CD8-positive, alpha-beta memory T cell (primary cell): ENCODE measurements at regions of chr6 and their contacts with region 1.

Region 1: GRCh38 chr6:137799950-137800568 is 67.0 kb upstream of the TNFAIP3 start:
- DNase-seq: peak; percentile 44 to 82 (median 73)
- H3K4me3 ChIP-seq: no peak overlapping the region
- H3K4me3 Mint-ChIP-seq: peak overlapping the region in 1 of 7 donors; percentile 30
- H3K27ac ChIP-seq: no peak overlapping the region
- H3K27ac Mint-ChIP-seq: peak overlapping the region in 7 of 8 donors; percentile 21 to 91 (median 82)
- H3K4me1 ChIP-seq: peaks cover 38% of the 10 kb centered on the region
- H3K4me1 Mint-ChIP-seq: peaks cover 32 to 57% (median 39%) of the 10 kb centered on the region in 3 donors
- H3K27me3 ChIP-seq: no peaks in the 10 kb centered on the region
- H3K27me3 Mint-ChIP-seq: no peaks in the 10 kb centered on the region

Region 2: DNA sequence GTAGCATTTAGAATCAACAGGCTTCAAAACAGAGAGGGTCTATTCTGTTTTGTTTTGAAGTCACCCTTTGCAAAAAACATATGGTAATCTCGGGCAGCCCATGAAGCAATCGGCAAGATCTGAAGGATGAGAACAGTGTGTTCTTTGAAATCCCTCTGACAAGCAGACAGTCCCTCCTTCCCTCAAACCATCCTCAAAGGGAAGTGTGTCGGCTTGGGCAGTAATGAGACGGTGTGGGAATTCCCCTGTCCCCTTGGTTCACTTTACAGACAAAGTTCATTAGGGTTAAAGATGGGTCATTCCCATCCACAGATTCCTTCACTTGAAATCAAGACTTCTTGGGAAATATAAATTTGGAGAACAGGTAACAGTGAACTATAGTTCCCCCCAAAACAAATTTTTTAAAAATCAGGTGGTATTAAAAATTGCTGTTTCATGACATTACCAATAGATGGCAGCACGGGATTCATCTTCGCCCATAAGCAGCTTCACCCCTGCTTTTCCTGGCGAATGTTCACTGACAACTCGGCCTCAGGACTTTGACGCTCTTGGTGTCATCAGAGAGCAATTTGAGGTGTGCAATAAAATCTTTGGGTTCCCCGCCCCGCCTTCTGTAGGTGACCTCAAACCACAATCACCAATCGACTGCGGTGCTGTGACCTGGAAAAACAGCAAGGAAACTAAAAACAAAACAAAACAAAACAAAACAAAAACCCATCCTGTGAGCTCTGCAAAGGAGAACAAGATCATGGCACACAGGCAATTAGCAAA is 92.3 kb before region 1 on chr6:
- CTCF ChIA-PET with region 1: interaction called, 30 read pairs
- POLR2A ChIA-PET with region 1: interaction called, 3 read pairs
- DNase-seq: peak; percentile 74 to 96 (median 92)
- H3K4me3 ChIP-seq: peak overlapping the region; percentile 20
- H3K4me3 Mint-ChIP-seq: peak overlapping the region; percentile 38 to 78 (median 75)
- H3K27ac ChIP-seq: peak overlapping the region; percentile 72
- H3K27ac Mint-ChIP-seq: peak overlapping the region; percentile 90 to 99 (median 97)
- H3K4me1 ChIP-seq: peaks cover 47% of the 10 kb centered on the region
- H3K4me1 Mint-ChIP-seq: peaks cover 50 to 75% (median 72%) of the 10 kb centered on the region in 3 donors
- H3K27me3 ChIP-seq: no peaks in the 10 kb centered on the region
- H3K27me3 Mint-ChIP-seq: peaks cover 0 to 7% of the 10 kb centered on the region in 2 donors

Region 3: GRCh38 chr6:137717074-137718073 is 82.7 kb before region 1 on chr6:
- CTCF ChIA-PET with region 1: interaction called, 22 read pairs
- POLR2A ChIA-PET with region 1: interaction called, 3 read pairs
- DNase-seq: peak; percentile 62 to 94 (median 82)
- H3K4me3 ChIP-seq: no peak overlapping the region
- H3K4me3 Mint-ChIP-seq: peak overlapping the region; percentile 30 to 73 (median 61)
- H3K27ac ChIP-seq: peak overlapping the region; percentile 60
- H3K27ac Mint-ChIP-seq: peak overlapping the region; percentile 92 to 100 (median 98)
- H3K4me1 ChIP-seq: peaks cover 36% of the 10 kb centered on the region
- H3K4me1 Mint-ChIP-seq: peaks cover 47 to 59% (median 55%) of the 10 kb centered on the region in 3 donors
- H3K27me3 ChIP-seq: no peaks in the 10 kb centered on the region
- H3K27me3 Mint-ChIP-seq: peaks cover 0 to 1% of the 10 kb centered on the region in 2 donors

Region 4: GRCh38 chr6:137938770-137939379 is 138.8 kb after region 1 on chr6:
- CTCF ChIA-PET with region 1: interaction called, 19 read pairs
- POLR2A ChIA-PET with region 1: no interaction called
- DNase-seq: no peak
- H3K4me3 ChIP-seq: no peak overlapping the region
- H3K4me3 Mint-ChIP-seq: no peak overlapping the region
- H3K27ac ChIP-seq: no peak overlapping the region
- H3K27ac Mint-ChIP-seq: peak overlapping the region in 1 of 8 donors; percentile 50
- H3K4me1 ChIP-seq: peaks cover 7% of the 10 kb centered on the region
- H3K4me1 Mint-ChIP-seq: peaks cover 11 to 15% (median 12%) of the 10 kb centered on the region in 3 donors
- H3K27me3 ChIP-seq: no peaks in the 10 kb centered on the region
- H3K27me3 Mint-ChIP-seq: peaks cover 0 to 4% of the 10 kb centered on the region in 2 donors

Region 5: GRCh38 chr6:137944793-137945498 is 144.9 kb after region 1 on chr6:
- CTCF ChIA-PET with region 1: interaction called, 19 read pairs
- POLR2A ChIA-PET with region 1: no interaction called
- DNase-seq: peak in 2 of 5 donors; percentile 3 to 39
- H3K4me3 ChIP-seq: no peak overlapping the region
- H3K4me3 Mint-ChIP-seq: peak overlapping the region in 1 of 7 donors; percentile 22
- H3K27ac ChIP-seq: no peak overlapping the region
- H3K27ac Mint-ChIP-seq: peak overlapping the region in 6 of 8 donors; percentile 7 to 79 (median 64)
- H3K4me1 ChIP-seq: peaks cover 10% of the 10 kb centered on the region
- H3K4me1 Mint-ChIP-seq: peaks cover 21 to 27% (median 27%) of the 10 kb centered on the region in 3 donors
- H3K27me3 ChIP-seq: no peaks in the 10 kb centered on the region
- H3K27me3 Mint-ChIP-seq: no peaks in the 10 kb centered on the region

Region 6: GRCh38 chr6:137975188-137975940 is 175.3 kb after region 1 on chr6:
- CTCF ChIA-PET with region 1: interaction called, 10 read pairs
- POLR2A ChIA-PET with region 1: interaction called, 4 read pairs
- DNase-seq: peak in 4 of 5 donors; percentile 31 to 77 (median 54)
- H3K4me3 ChIP-seq: peak overlapping the region; percentile 33
- H3K4me3 Mint-ChIP-seq: peak overlapping the region; percentile 69 to 88 (median 81)
- H3K27ac ChIP-seq: peak overlapping the region; percentile 21
- H3K27ac Mint-ChIP-seq: peak overlapping the region; percentile 81 to 99 (median 97)
- H3K4me1 ChIP-seq: peaks cover 24% of the 10 kb centered on the region
- H3K4me1 Mint-ChIP-seq: peaks cover 65 to 75% (median 73%) of the 10 kb centered on the region in 3 donors
- H3K27me3 ChIP-seq: no peaks in the 10 kb centered on the region
- H3K27me3 Mint-ChIP-seq: no peaks in the 10 kb centered on the region